Ovary (tissue), 10 donors: ENCODE measurements at regions of chr13 and their contacts with region 1.

Region 1: GRCh38 chr13:46553886-46554858 is 1.2 kb downstream of the LRCH1 start:
- DNase-seq: peak; percentile 63 to 79 (median 67)
- H3K4me3 ChIP-seq: peak overlapping the region; percentile 65
- H3K27ac ChIP-seq: peak overlapping the region; percentile 79 to 94
- H3K4me1 ChIP-seq: peaks cover 1% of the 10 kb centered on the region
- H3K27me3 ChIP-seq: no peaks in the 10 kb centered on the region
- CTCF ChIP-seq: peak in 1 of 3 donors; percentile 6
- EP300 ChIP-seq: no peak
- POLR2A ChIP-seq: no peak

Region 2: GRCh38 chr13:46679369-46680120 is 125.4 kb after region 1 on chr13:
- intact Hi-C with region 1: loop called in 1 of 4 experiments (anchors 5 kb)
- DNase-seq: peak in 4 of 5 donors; percentile 34 to 50 (median 45)
- H3K4me3 ChIP-seq: peak overlapping the region; percentile 24
- H3K27ac ChIP-seq: peak overlapping the region; percentile 73 to 75
- H3K4me1 ChIP-seq: peaks cover 3% of the 10 kb centered on the region
- H3K27me3 ChIP-seq: no peaks in the 10 kb centered on the region
- CTCF ChIP-seq: no peak
- EP300 ChIP-seq: no peak
- POLR2A ChIP-seq: no peak

Region 3: GRCh38 chr13:46698910-46699460 is 144.8 kb after region 1 on chr13:
- intact Hi-C with region 1: loop called in 2 of 4 experiments (anchors 10 kb)
- DNase-seq: no peak
- H3K4me3 ChIP-seq: no peak overlapping the region
- H3K27ac ChIP-seq: peak overlapping the region in 1 of 2 donors; percentile 43
- H3K4me1 ChIP-seq: peaks cover 23% of the 10 kb centered on the region
- H3K27me3 ChIP-seq: no peaks in the 10 kb centered on the region
- CTCF ChIP-seq: no peak
- EP300 ChIP-seq: no peak
- POLR2A ChIP-seq: no peak

Region 4: GRCh38 chr13:46721054-46721453 is 166.9 kb after region 1 on chr13:
- intact Hi-C with region 1: loop called (anchors 2 to 10 kb)
- DNase-seq: peak; percentile 18 to 65 (median 53)
- H3K4me3 ChIP-seq: no peak overlapping the region
- H3K27ac ChIP-seq: no peak overlapping the region
- H3K4me1 ChIP-seq: no peaks in the 10 kb centered on the region
- H3K27me3 ChIP-seq: no peaks in the 10 kb centered on the region
- CTCF ChIP-seq: peak; percentile 29 to 92 (median 75)
- EP300 ChIP-seq: no peak
- POLR2A ChIP-seq: no peak